ENCODE measurements at regions of chr11 and their contacts with region 1.

Region 1: GRCh38 chr11:129117595-129118350 is 74.4 kb downstream of the ARHGAP32 start:
- DNase-seq: peak in 1 of 3 donors; percentile 70
- ATAC-seq: peak; percentile 79
- H3K4me3 ChIP-seq: no peak overlapping the region
- H3K4me1 ChIP-seq: peaks cover 3% of the 10 kb centered on the region
- CTCF ChIP-seq: peak; percentile 32

Region 2: DNA sequence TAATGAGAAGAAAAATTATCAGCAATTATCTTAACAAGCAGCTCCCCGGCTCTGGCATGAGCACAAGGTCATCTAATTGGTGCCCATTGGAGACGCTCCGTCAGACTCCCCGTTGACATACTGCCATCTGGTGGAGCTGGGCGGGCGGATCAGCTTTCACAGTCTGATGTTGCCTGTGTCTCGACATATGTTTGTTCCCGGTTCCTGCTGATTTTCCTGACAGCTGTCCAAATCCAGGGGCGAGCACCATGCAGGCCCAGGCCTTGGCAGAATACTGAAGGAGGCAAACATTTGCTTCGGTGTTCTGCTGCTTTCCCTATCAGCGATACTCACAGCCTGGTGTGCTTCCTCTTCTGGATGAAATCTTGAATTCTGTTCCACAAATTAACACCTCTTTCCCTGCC is 214.1 kb after region 1 on chr11:
- intact Hi-C with region 1: loop called in 1 of 2 experiments (anchors 2 kb)
- DNase-seq: peak; percentile 83 to 92 (median 91)
- ATAC-seq: peak; percentile 95
- H3K4me3 ChIP-seq: no peak overlapping the region
- H3K4me1 ChIP-seq: no peaks in the 10 kb centered on the region
- CTCF ChIP-seq: peak; percentile 81

Measured in mucosa of descending colon (tissue), 3 donors.